Heart left ventricle (tissue), 16 donors: ENCODE measurements at regions of chr15 and their contacts with region 1.

Region 1: GRCh38 chr15:58715266-58715917 is 34.1 kb downstream of the ADAM10 start:
- DNase-seq: no peak
- ATAC-seq: no peak
- H3K4me3 ChIP-seq: no peak overlapping the region
- H3K27ac ChIP-seq: no peak overlapping the region
- H3K4me1 ChIP-seq: peaks cover 0 to 10% (median 0%) of the 10 kb centered on the region in 12 donors
- H3K27me3 ChIP-seq: no peaks in the 10 kb centered on the region
- CTCF ChIP-seq: no peak
- POLR2A ChIP-seq: no peak

Region 2: DNA sequence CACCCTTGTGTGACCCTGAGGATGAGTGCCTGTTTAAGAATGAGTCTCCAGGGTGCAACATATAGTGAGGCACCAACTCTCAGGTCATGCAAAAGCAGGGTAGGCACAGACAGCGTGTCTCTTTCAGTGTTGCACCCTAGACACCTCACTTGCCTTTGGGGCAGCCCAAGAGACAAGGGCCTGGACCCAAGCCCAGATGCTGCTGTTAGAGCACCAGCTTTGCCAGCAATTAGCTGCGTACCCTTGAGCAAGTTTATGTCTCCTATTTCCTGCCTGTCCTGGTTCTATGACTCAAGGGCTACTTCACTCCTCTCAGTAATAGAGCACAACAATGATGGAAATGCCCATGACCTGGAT is 454.5 kb before region 1 on chr15:
- intact Hi-C with region 1: no loop called
- DNase-seq: peak in 3 of 5 donors; percentile 32 to 80 (median 74)
- ATAC-seq: peak; percentile 74 to 90 (median 82)
- H3K4me3 ChIP-seq: no peak overlapping the region
- H3K27ac ChIP-seq: peak overlapping the region; percentile 27 to 82 (median 70)
- H3K4me1 ChIP-seq: peaks cover 0 to 22% (median 6%) of the 10 kb centered on the region in 12 donors
- H3K27me3 ChIP-seq: no peaks in the 10 kb centered on the region
- CTCF ChIP-seq: no peak
- POLR2A ChIP-seq: no peak

Region 3: GRCh38 chr15:58690703-58691102 is 24.7 kb before region 1 on chr15:
- intact Hi-C with region 1: loop called in 1 of 10 experiments (anchors 2 kb)
- DNase-seq: no peak
- ATAC-seq: peak in 2 of 4 donors; percentile 22 to 38
- H3K4me3 ChIP-seq: no peak overlapping the region
- H3K27ac ChIP-seq: no peak overlapping the region
- H3K4me1 ChIP-seq: peaks cover 0 to 34% (median 17%) of the 10 kb centered on the region in 12 donors
- H3K27me3 ChIP-seq: no peaks in the 10 kb centered on the region
- CTCF ChIP-seq: no peak
- POLR2A ChIP-seq: no peak